Transverse colon (tissue), 4 donors: ENCODE measurements at regions of chr4 and their contacts with region 1.

Region 1: DNA sequence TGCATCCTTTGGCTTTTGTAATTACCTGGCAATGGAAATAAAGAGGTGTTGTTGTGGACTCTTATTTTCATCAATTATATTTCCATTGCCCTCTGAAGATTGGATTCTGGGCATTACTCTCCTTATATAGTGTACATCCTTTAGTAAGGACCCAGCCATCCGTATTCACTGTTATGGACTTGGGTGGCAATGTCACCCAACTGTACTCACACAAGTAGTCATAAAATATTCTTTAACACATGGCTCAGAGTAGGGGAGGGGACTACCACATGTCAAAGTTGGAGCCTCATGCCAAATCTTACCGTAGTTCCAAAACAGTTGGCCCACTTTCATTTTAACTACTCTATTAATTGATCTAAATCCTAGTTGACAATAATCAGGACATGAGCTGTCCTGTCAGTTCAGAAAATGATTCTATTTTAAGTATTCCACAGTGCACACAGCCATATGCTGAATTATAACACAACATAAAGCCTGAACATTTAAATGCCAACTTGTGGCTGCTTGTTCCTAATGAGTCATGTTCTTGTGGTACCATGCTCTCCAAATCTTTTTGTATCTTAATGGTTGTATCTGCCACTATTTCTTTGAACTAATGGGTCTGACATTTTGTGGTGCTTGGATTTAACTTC is 4.9 kb downstream of the FRAS1 start:
- DNase-seq: no peak
- H3K4me3 ChIP-seq: no peak overlapping the region
- H3K27ac ChIP-seq: no peak overlapping the region
- H3K4me1 ChIP-seq: peaks cover 0 to 28% (median 19%) of the 10 kb centered on the region in 4 donors
- H3K27me3 ChIP-seq: peaks cover 20% of the 10 kb centered on the region
- CTCF ChIP-seq: no peak
- EP300 ChIP-seq: no peak
- POLR2A ChIP-seq: no peak

Region 2: GRCh38 chr4:78032445-78033328 is 29.4 kb before region 1 on chr4:
- in situ Hi-C with region 1: no loop called
- intact Hi-C with region 1: loop called (anchors 2 kb)
- DNase-seq: no peak
- H3K4me3 ChIP-seq: no peak overlapping the region
- H3K27ac ChIP-seq: no peak overlapping the region
- H3K4me1 ChIP-seq: no peaks in the 10 kb centered on the region
- H3K27me3 ChIP-seq: no peaks in the 10 kb centered on the region
- CTCF ChIP-seq: no peak
- EP300 ChIP-seq: no peak
- POLR2A ChIP-seq: no peak

Region 3: DNA sequence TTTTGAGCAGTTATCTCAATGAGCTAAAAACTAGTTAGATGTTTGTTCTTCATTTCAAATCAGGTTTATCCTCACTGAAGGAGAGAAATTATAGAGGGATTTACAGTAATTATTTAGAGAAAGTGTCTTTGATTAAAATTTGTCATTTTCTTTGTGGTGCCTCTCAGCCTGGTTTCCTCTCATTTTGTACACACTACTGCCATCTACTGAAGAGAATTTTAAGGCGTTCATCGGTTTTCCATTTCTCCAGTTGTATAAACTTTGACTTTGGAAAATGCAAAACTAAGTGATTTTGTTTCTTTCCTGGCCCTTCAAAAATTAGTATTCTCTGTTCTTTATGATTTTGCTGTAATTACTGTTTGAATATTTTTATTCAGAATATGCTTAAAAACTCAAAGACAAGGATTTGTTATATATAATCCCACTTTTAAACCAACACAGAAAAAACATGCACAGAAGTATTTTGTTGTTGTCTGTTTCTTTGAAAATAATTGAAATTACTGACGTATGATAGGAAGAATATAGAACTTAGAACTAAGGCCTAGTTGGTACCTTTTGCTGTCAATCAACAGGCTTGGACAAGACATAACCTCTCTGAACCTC is 455.1 kb after region 1 on chr4:
- in situ Hi-C with region 1: loop called in 1 of 4 experiments (anchors 10 kb)
- intact Hi-C with region 1: no loop called
- DNase-seq: no peak
- H3K4me3 ChIP-seq: no peak overlapping the region
- H3K27ac ChIP-seq: no peak overlapping the region
- H3K4me1 ChIP-seq: peaks cover 0 to 10% (median 4%) of the 10 kb centered on the region in 4 donors
- H3K27me3 ChIP-seq: no peaks in the 10 kb centered on the region
- CTCF ChIP-seq: peak; percentile 46 to 58 (median 48)
- EP300 ChIP-seq: no peak
- POLR2A ChIP-seq: no peak